MCF 10A (cell line): ENCODE measurements at regions of chr5 and their contacts with region 1.

Region 1: GRCh38 chr5:158174918-158175851 is 316.2 kb upstream of the CLINT1 start:
- DNase-seq: peak; percentile 84
- H3K4me3 Mint-ChIP-seq: no peak overlapping the region
- H3K27ac Mint-ChIP-seq: peak overlapping the region; percentile 1
- H3K4me1 Mint-ChIP-seq: peaks cover 7% of the 10 kb centered on the region
- H3K27me3 Mint-ChIP-seq: no peaks in the 10 kb centered on the region
- CTCF ChIP-seq: peak; percentile 98

Region 2: DNA sequence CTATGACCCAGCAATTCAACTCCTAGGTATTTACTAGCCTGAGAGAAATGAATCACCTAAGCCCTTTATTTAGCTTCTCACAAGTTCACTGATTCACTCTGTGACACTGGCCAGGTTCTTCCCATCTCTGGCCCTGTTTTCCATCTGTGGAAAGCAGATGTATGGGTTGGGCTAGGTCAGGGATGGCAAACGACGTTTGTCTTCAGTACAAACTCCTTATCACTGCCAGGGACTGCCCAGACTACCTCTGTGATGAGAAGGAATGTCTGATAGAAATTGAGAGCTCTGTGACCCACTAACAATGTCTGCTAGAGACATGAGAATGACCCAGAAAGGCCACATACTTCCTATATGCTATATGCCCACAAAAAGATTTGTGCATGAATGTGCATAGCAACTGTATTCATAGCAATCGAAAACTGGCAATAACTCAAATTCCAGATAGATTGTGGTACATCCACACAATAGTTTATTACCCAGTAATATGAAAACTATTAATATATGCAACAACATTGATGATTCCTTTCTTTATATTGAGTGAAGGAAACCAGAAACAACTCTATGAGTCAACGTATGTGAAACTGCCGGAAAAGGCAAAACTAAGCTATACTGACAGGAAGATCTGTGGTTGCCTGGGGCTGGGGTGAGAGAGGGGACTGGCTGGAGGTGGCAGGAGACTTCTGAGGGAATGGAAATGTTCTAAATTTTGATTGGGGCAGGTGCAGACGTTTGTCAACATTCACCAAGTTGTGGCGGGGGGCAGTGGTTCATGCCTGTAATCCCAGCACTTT is 567.6 kb before region 1 on chr5:
- CTCF ChIA-PET with region 1: no interaction called
- POLR2A ChIA-PET with region 1: no interaction called
- intact Hi-C with region 1: no loop called
- DNase-seq: peak; percentile 85
- H3K4me3 Mint-ChIP-seq: no peak overlapping the region
- H3K27ac Mint-ChIP-seq: peak overlapping the region; percentile 97
- H3K4me1 Mint-ChIP-seq: peaks cover 36% of the 10 kb centered on the region
- H3K27me3 Mint-ChIP-seq: no peaks in the 10 kb centered on the region
- CTCF ChIP-seq: no peak

Region 3: DNA sequence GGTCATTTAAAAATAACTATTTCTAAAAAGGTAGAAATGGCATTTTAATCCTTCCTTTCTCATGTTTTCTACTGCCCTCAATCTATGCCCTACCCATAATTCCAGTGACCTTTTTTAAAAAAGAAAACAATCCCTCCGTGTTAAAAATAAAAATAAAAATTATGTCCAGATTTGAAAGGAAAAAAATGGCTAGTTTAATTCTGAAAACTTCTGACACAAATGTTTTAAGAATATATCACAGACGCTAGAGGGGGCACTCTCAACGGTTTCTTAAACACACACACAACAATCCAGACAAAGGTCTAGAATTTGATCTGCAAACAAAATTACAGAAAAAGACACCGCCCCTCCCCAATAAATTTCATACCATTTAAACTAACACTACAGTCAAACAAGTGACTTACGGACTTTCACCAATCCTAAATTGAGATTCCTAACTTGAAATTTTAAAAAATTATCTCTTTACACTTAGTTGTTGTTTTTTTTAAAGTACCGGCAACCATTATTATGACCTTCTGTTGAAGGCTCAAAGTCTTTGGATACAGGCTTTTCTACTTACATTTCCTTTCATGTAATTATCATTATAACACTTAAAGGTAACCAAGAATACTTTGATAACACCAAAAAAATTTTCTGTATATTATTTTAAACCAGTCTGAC is 354.5 kb before region 1 on chr5:
- CTCF ChIA-PET with region 1: interaction called, 6 read pairs
- POLR2A ChIA-PET with region 1: interaction called, 3 read pairs
- intact Hi-C with region 1: loop called (anchors 10 kb)
- DNase-seq: peak; percentile 68
- H3K4me3 Mint-ChIP-seq: no peak overlapping the region
- H3K27ac Mint-ChIP-seq: peak overlapping the region; percentile 61
- H3K4me1 Mint-ChIP-seq: peaks cover 21% of the 10 kb centered on the region
- H3K27me3 Mint-ChIP-seq: no peaks in the 10 kb centered on the region
- CTCF ChIP-seq: peak; percentile 68

Region 4: DNA sequence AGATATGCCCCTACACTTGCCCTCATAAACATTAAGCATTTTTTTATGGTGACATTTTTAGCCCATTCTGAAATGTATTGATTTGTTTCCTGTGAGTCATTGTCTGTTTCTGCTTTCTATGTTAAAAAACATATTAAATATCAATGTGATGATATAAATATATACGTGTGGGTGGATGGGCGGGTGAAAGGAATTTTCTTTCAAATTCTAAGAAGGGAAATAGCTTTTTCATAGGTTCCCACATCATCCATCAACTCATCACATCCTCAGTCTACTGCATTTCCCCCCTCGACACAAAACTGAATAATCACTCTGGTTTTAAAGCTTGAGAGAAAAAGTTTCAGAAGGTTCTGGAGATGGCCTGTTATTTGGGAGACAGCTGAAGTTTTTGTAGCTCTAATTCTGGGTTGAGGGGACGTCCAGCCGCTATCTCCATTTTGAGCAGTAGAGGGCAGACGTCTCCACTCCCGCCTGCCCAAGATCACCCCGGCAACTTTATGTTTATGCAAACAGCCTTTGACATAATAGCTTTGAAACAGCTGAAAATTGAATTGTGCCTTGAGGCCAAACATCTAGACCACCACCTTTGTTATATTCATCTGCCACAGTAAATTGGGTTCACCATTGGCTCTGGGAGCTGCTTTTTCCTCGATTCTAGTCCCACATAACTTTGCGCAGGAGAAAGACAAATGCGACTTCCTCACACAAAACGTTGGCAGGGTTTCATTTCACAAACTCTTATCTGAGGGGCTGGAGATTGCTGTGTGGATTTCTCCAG is 100.0 kb before region 1 on chr5:
- CTCF ChIA-PET with region 1: interaction called, 28 read pairs
- POLR2A ChIA-PET with region 1: interaction called, 3 read pairs
- intact Hi-C with region 1: loop called (anchors 1 kb)
- DNase-seq: peak; percentile 73
- H3K4me3 Mint-ChIP-seq: no peak overlapping the region
- H3K27ac Mint-ChIP-seq: peak overlapping the region; percentile 61
- H3K4me1 Mint-ChIP-seq: peaks cover 7% of the 10 kb centered on the region
- H3K27me3 Mint-ChIP-seq: no peaks in the 10 kb centered on the region
- CTCF ChIP-seq: peak; percentile 91

Region 5: GRCh38 chr5:158382473-158382872 is 207.3 kb after region 1 on chr5:
- CTCF ChIA-PET with region 1: interaction called, 5 read pairs
- POLR2A ChIA-PET with region 1: interaction called, 3 read pairs
- intact Hi-C with region 1: loop called (anchors 1 kb)
- DNase-seq: peak; percentile 99
- H3K4me3 Mint-ChIP-seq: no peak overlapping the region
- H3K27ac Mint-ChIP-seq: peak overlapping the region; percentile 82
- H3K4me1 Mint-ChIP-seq: peaks cover 52% of the 10 kb centered on the region
- H3K27me3 Mint-ChIP-seq: no peaks in the 10 kb centered on the region
- CTCF ChIP-seq: no peak

Region 6: DNA sequence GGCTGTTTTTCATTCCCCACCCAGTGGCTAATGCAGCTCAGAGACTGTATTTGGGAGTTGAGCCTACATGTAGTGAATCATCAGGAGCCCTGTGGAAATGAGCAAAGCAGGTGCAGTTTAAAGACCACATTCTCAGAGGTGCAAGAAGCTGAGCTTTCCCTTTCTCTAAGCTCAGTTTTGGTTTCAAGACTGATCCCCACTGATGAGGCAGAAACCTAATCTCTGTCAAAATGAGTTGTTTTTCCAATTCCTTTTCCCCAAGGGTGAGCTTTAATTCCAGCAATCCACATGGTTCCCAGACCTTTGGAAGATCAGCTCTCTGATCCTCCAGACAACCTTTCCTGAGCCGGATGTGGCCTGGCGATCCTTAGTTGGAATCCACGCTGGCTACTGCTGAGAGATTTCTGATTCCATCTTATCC is 504.0 kb after region 1 on chr5:
- CTCF ChIA-PET with region 1: interaction called, 28 read pairs
- POLR2A ChIA-PET with region 1: no interaction called
- intact Hi-C with region 1: no loop called
- DNase-seq: no peak
- H3K4me3 Mint-ChIP-seq: no peak overlapping the region
- H3K27ac Mint-ChIP-seq: no peak overlapping the region
- H3K4me1 Mint-ChIP-seq: peaks cover 5% of the 10 kb centered on the region
- H3K27me3 Mint-ChIP-seq: peaks cover 11% of the 10 kb centered on the region
- CTCF ChIP-seq: no peak

Region 7: GRCh38 chr5:159094745-159095144 is 919.6 kb after region 1 on chr5:
- CTCF ChIA-PET with region 1: interaction called, 15 read pairs
- POLR2A ChIA-PET with region 1: no interaction called
- intact Hi-C with region 1: no loop called
- DNase-seq: peak; percentile 99
- H3K4me3 Mint-ChIP-seq: no peak overlapping the region
- H3K27ac Mint-ChIP-seq: no peak overlapping the region
- H3K4me1 Mint-ChIP-seq: peaks cover 38% of the 10 kb centered on the region
- H3K27me3 Mint-ChIP-seq: peaks cover 23% of the 10 kb centered on the region
- CTCF ChIP-seq: no peak

Region 8: GRCh38 chr5:159133041-159133741 is 958.0 kb after region 1 on chr5:
- CTCF ChIA-PET with region 1: interaction called, 16 read pairs
- POLR2A ChIA-PET with region 1: interaction called, 3 read pairs
- intact Hi-C with region 1: loop called (anchors 2 kb)
- DNase-seq: peak; percentile 80
- H3K4me3 Mint-ChIP-seq: no peak overlapping the region
- H3K27ac Mint-ChIP-seq: no peak overlapping the region
- H3K4me1 Mint-ChIP-seq: peaks cover 7% of the 10 kb centered on the region
- H3K27me3 Mint-ChIP-seq: no peaks in the 10 kb centered on the region
- CTCF ChIP-seq: peak; percentile 92